ENCODE measurements at regions of chr10 and their contacts with region 1.

Region 1: GRCh38 chr10:68735119-68735518 is 14.1 kb downstream of the CCAR1 start:
- H3K4me3 ChIP-seq: no peak overlapping the region
- H3K27ac ChIP-seq: no peak overlapping the region
- H3K4me1 ChIP-seq: no peaks in the 10 kb centered on the region
- CTCF ChIP-seq: no peak

Region 2: DNA sequence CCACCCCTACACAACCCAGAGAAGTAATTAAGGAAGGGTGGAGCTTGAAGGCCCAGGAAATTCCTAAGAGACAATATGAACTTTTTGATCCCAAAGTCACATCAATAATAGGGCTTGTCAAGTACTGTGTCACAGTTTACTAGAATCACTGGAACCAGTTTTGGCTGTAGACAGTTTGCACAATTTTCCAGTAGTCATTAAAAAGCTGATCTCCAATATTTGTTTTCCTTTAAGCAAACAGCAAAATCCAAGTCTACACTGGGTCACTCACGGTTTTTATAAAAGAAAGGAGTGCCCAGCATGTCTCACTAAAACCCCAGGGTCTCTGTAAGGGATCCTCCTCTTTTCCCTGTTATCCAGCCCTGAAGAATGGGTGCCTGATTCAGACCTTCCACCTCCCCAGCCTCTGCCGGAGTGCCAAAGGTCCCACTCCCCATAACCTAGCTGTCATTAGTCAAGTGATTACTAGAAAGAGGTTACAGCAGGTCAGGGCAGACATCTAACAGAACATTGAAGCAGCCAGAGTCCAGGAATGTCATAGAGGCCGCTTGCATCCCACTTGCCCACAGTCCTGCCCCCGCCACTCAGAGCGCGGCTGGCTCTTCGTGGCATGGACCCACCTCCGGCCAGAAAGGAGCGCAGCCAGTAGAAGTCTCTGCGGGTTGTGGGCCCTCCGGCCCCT is 208.4 kb before region 1 on chr10:
- CTCF ChIA-PET with region 1: no interaction called
- POLR2A ChIA-PET with region 1: interaction called, 10 read pairs
- H3K4me3 ChIP-seq: peak overlapping the region; percentile 80
- H3K27ac ChIP-seq: peak overlapping the region; percentile 65; the same call in 1 of the 2 replicates
- H3K4me1 ChIP-seq: no peaks in the 10 kb centered on the region
- CTCF ChIP-seq: no peak

Region 3: GRCh38 chr10:68550747-68551411 is 184.2 kb before region 1 on chr10:
- CTCF ChIA-PET with region 1: no interaction called
- POLR2A ChIA-PET with region 1: no interaction called
- H3K4me3 ChIP-seq: no peak overlapping the region
- H3K27ac ChIP-seq: no peak overlapping the region
- H3K4me1 ChIP-seq: no peaks in the 10 kb centered on the region
- CTCF ChIP-seq: peak; percentile 42; the same call in 1 of the 2 replicates

Region 4: GRCh38 chr10:68784476-68784875 is 49.4 kb after region 1 on chr10:
- CTCF ChIA-PET with region 1: no interaction called
- POLR2A ChIA-PET with region 1: no interaction called
- H3K4me3 ChIP-seq: no peak overlapping the region
- H3K27ac ChIP-seq: no peak overlapping the region
- H3K4me1 ChIP-seq: no peaks in the 10 kb centered on the region
- CTCF ChIP-seq: no peak

Region 5: GRCh38 chr10:69004821-69005220 is 269.7 kb after region 1 on chr10:
- CTCF ChIA-PET with region 1: no interaction called
- POLR2A ChIA-PET with region 1: no interaction called
- H3K4me3 ChIP-seq: no peak overlapping the region
- H3K27ac ChIP-seq: no peak overlapping the region
- H3K4me1 ChIP-seq: no peaks in the 10 kb centered on the region
- CTCF ChIP-seq: no peak

Measured in HEK293 (cell line).